H1 (cell line): ENCODE measurements at regions of chr15 and their contacts with region 1.

Region 1: GRCh38 chr15:40743921-40744814 is 10.9 kb downstream of the RMDN3 start:
- DNase-seq: no peak
- H3K4me3 ChIP-seq: no peak overlapping the region
- H3K27ac ChIP-seq: no peak overlapping the region
- H3K4me1 ChIP-seq: peaks cover 9 to 16% (median 10%) of the 10 kb centered on the region in 4 experiments
- H3K27me3 ChIP-seq: no peaks in the 10 kb centered on the region
- CTCF ChIP-seq: peak in 2 of 3 experiments; percentile 10 to 15; a peak in 2 of 4 replicates
- EP300 ChIP-seq: no peak
- POLR2A ChIP-seq: no peak
- RAD21 ChIP-seq: peak in 1 of 2 experiments; percentile 9; a peak in 1 of 4 replicates

Region 2: DNA sequence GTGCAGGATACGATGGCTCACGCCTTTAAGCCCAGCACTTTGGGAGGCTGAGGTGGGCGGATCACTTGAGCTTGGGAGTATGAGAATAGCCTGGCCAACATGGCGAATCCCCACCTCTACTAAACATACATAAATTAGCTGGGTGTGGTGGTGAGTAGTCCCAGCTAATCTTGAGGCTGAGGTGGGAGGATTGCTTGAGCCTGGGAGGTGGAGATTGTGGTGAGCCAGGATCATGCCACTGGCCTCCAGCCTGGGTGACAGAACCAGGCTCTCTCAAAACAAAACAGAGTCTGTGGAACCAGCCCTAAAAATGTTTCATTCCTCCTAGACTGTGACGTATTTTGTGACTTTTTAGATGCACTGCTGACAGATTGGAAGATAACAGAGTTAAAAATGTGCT is 83.5 kb before region 1 on chr15:
- CTCF ChIA-PET with region 1: no interaction called
- POLR2A ChIA-PET with region 1: no interaction called
- DNase-seq: no peak
- H3K4me3 ChIP-seq: no peak overlapping the region
- H3K27ac ChIP-seq: no peak overlapping the region
- H3K4me1 ChIP-seq: no peaks in the 10 kb centered on the region
- H3K27me3 ChIP-seq: no peaks in the 10 kb centered on the region
- CTCF ChIP-seq: no peak
- EP300 ChIP-seq: no peak
- POLR2A ChIP-seq: no peak
- RAD21 ChIP-seq: no peak

Region 3: DNA sequence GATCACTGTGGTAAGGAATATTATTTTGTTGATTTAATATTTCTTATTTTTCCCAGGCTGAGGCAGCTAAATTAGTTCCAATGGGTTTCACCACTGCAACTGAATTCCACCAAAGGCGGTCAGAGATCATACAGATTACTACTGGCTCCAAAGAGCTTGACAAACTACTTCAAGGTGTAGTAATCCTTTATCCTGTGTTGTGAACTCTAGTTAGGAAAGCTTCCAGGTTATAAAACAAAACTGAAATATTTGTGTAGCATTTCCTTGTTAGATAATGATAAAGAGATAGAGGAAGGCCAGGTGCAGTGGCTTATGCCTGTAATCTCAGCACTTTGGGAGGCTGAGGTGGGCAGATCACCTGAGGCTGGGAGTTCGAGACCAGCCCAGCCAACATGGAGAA is 38.0 kb before region 1 on chr15:
- CTCF ChIA-PET with region 1: interaction called, 11 read pairs
- POLR2A ChIA-PET with region 1: interaction called, 7 read pairs
- DNase-seq: no peak
- H3K4me3 ChIP-seq: no peak overlapping the region
- H3K27ac ChIP-seq: no peak overlapping the region
- H3K4me1 ChIP-seq: no peaks in the 10 kb centered on the region
- H3K27me3 ChIP-seq: no peaks in the 10 kb centered on the region
- CTCF ChIP-seq: no peak
- EP300 ChIP-seq: no peak
- POLR2A ChIP-seq: no peak
- RAD21 ChIP-seq: no peak

Region 4: GRCh38 chr15:40756893-40757297 is 12.7 kb after region 1 on chr15:
- CTCF ChIA-PET with region 1: interaction called, 10 read pairs
- POLR2A ChIA-PET with region 1: interaction called, 5 read pairs
- DNase-seq: no peak
- H3K4me3 ChIP-seq: no peak overlapping the region
- H3K27ac ChIP-seq: no peak overlapping the region
- H3K4me1 ChIP-seq: 0 out of 7 replicates have a peak, but pooled peaks cover 0 to 2% (median under 1%) of the 10 kb centered on the region in 4 experiments
- H3K27me3 ChIP-seq: no peaks in the 10 kb centered on the region
- CTCF ChIP-seq: no peak
- EP300 ChIP-seq: no peak
- POLR2A ChIP-seq: no peak
- RAD21 ChIP-seq: no peak

Region 5: GRCh38 chr15:40763801-40764732 is 19.9 kb after region 1 on chr15 and contains the start of gene GCHFR:
- CTCF ChIA-PET with region 1: interaction called, 70 read pairs
- POLR2A ChIA-PET with region 1: interaction called, 9 read pairs
- DNase-seq: peak in 1 of 2 experiments; percentile 86
- H3K4me3 ChIP-seq: peak within 1 kb of the TSS; percentile 44 to 81 (median 74)
- H3K27ac ChIP-seq: no peak within 1 kb of the TSS
- H3K4me1 ChIP-seq: peaks cover 6 to 30% (median 19%) of the 10 kb centered on the region in 4 experiments
- H3K27me3 ChIP-seq: peaks cover 0 to 7% (median 3%) of the 10 kb centered on the region in 4 experiments; a peak in 5 of 7 replicates
- CTCF ChIP-seq: peak; percentile 26 to 30 (median 29)
- EP300 ChIP-seq: no peak
- POLR2A ChIP-seq: peak in 1 of 2 experiments; percentile 53; a peak in 1 of 3 replicates
- RAD21 ChIP-seq: no peak; a peak in 1 of 4 replicates
- total RNA-seq, gene GCHFR: 22.7 and 25.9 TPM in 2 replicates